HepG2 (cell line): ENCODE measurements at regions of chr1 and their contacts with region 1.

Region 1: GRCh38 chr1:245045087-245045881 is 109.5 kb upstream of the KIF26B start:
- DNase-seq: peak; percentile 98
- ATAC-seq: peak; percentile 98
- H3K4me3 ChIP-seq: peak overlapping the region; percentile 47 to 68 (median 56)
- H3K27ac ChIP-seq: peak overlapping the region; percentile 94
- H3K4me1 ChIP-seq: peaks cover 48% of the 10 kb centered on the region
- H3K27me3 ChIP-seq: no peaks in the 10 kb centered on the region
- CTCF ChIP-seq: 0 out of 2 replicates have a peak, but pooled peaks have one; percentile 7
- EP300 ChIP-seq: no peak; a peak in 1 of 4 replicates
- POLR2A ChIP-seq: peak; percentile 58 to 69
- RAD21 ChIP-seq: 0 out of 2 replicates have a peak, but pooled peaks have one; percentile 20

Region 2: GRCh38 chr1:244599937-244600350 is 445.3 kb before region 1 on chr1:
- CTCF ChIA-PET with region 1: no interaction called
- POLR2A ChIA-PET with region 1: no interaction called
- in situ Hi-C with region 1: loop called (anchors 25 kb)
- intact Hi-C with region 1: loop called (anchors 1 kb)
- DNase-seq: peak; percentile 16
- ATAC-seq: no peak
- H3K4me3 ChIP-seq: no peak overlapping the region
- H3K27ac ChIP-seq: no peak overlapping the region
- H3K4me1 ChIP-seq: no peaks in the 10 kb centered on the region
- H3K27me3 ChIP-seq: 0 out of 5 replicates have a peak, but pooled peaks cover 0 to 10% of the 10 kb centered on the region in 2 experiments
- CTCF ChIP-seq: no peak
- EP300 ChIP-seq: no peak; a peak in 1 of 4 replicates
- POLR2A ChIP-seq: no peak
- RAD21 ChIP-seq: no peak

Region 3: DNA sequence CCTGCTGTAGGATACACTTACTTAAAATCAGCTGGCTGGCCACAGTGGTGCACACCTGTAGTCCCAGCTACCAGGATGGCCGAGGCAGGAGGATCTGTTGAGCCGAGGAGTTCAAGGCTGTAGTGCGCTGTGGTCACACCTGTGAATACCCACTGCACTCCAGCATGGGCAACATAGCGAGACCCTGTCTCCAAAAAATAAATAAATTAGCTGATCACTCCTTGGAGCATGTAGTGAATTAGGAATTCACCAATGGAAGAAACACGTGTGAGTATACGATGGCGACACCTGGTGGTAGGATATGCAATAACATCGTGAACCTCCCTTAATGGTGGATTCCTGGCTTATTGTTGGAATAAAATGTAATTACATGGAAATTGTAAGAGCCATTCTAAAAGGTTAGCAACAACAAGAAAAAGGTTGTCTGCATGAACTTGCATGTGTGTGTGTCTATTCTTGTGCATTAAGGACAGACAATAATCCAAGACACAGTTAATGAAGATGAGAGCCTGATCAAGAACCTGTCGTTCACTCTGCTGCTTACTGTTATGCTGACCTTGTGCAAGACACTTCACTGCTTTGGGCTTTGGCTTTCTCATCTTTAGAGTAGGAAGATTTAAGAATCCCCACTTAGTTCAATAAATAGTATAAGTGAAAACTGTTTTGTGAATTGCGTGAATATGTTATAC is 248.4 kb before region 1 on chr1:
- CTCF ChIA-PET with region 1: interaction called, 13 read pairs
- POLR2A ChIA-PET with region 1: no interaction called
- in situ Hi-C with region 1: no loop called
- intact Hi-C with region 1: loop called (anchors 1 kb)
- DNase-seq: peak; percentile 51
- ATAC-seq: peak; percentile 52
- H3K4me3 ChIP-seq: no peak overlapping the region
- H3K27ac ChIP-seq: no peak overlapping the region
- H3K4me1 ChIP-seq: peaks cover 30% of the 10 kb centered on the region
- H3K27me3 ChIP-seq: no peaks in the 10 kb centered on the region
- CTCF ChIP-seq: peak; percentile 89
- EP300 ChIP-seq: no peak
- POLR2A ChIP-seq: no peak
- RAD21 ChIP-seq: peak; percentile 30

Region 4: DNA sequence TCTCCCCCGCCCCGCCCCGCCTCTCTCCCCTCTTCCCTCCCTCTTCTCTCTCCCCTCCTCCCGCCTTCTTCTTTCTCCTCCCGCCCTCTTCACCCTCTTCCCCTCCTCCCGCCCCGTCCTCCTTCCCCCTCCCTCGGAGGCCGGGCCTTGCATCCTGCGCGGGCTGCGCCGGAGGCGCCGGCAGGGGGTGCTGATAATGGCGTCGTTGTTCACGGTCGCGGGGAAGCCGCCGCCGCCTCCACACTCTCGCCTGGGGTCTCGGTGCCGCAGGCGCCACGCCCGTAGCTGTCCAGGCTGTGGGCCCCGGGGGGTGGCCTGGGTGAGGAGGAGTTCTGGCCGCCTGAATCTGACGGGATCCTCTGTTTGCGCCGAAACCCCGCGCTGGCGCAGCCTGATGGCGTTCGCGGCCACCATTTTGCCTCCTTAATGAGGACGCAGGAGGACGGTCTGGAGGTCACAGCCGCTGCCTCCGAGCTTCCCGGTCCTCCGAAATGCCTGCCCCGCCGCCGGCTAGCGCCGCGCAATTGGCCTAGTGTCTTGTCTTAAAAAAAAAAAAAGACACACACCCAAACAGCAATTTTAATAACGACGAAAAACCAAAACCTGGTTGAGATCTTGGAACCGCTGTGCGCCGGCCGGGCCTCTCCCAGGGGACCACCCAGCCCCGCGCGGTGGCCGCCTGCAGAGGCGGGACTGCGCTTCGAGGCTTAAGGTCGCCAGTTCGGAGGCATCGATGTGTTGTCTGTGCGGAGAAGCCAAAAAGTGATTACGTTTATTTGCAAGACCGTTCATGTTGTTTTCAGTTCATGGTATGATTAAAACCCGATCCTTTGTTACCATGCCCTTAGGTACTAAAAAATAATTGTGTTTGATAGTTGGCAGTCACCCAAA is 74.4 kb before region 1 on chr1:
- CTCF ChIA-PET with region 1: interaction called, 6 read pairs
- POLR2A ChIA-PET with region 1: interaction called, 6 read pairs
- in situ Hi-C with region 1: loop called (anchors 5 kb)
- intact Hi-C with region 1: loop called (anchors 1 kb)
- DNase-seq: peak; percentile 91
- ATAC-seq: peak; percentile 79
- H3K4me3 ChIP-seq: peak overlapping the region; percentile 66 to 80 (median 75)
- H3K27ac ChIP-seq: peak overlapping the region; percentile 98
- H3K4me1 ChIP-seq: peaks cover 25% of the 10 kb centered on the region
- H3K27me3 ChIP-seq: no peaks in the 10 kb centered on the region; a peak in 1 of 5 replicates
- CTCF ChIP-seq: peak; percentile 82
- EP300 ChIP-seq: no peak; a peak in 2 of 4 replicates
- POLR2A ChIP-seq: peak; percentile 68 to 87; a peak in 3 of 4 replicates
- RAD21 ChIP-seq: peak; percentile 73

Region 5: DNA sequence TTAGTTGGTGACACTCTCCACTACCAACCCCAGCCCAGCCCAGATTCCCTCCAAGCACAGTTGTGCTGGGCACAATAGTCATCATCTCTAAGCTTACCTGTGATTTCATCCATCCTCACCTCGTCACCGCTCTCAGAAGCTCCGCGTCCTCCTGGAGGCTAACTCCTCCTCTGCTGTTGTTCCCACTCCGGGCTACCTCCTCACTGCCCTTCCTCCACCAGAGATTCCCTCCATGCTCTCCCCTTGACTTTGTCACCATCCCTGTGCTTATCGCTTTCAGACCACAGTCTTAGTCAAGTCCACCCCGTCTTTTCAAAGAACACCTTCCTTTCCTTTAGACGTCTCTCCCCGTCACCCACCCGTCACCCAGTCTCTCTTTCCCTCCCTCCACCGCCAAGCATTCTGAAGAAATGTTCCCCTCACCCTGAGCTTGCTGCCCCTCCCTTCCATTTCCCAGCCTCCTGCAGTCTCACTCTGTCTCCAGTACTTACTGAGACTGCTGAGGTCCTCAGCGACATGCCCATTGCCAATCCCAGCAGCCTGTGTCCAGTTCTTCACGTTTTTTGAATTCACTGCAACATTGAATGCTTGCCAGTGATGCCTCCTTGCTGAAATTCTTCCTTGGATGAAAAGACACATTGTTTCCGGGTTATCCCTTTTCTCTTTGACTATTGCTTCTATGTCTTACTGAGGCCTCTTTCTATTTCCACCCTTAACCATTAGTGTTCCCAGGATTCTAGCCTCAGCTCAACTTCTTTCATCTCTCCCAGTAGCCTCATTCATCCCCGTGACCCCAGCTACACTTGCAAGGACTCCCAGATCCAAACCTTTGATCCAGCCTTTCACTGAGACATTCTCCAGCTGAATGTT is 62.7 kb after region 1 on chr1:
- CTCF ChIA-PET with region 1: no interaction called
- POLR2A ChIA-PET with region 1: no interaction called
- in situ Hi-C with region 1: no loop called
- intact Hi-C with region 1: loop called (anchors 1 kb)
- DNase-seq: no peak
- ATAC-seq: peak; percentile 41
- H3K4me3 ChIP-seq: peak overlapping the region; percentile 39 to 68 (median 55); a peak in 4 of 6 replicates
- H3K27ac ChIP-seq: peak overlapping the region; percentile 77
- H3K4me1 ChIP-seq: peaks cover 53% of the 10 kb centered on the region
- H3K27me3 ChIP-seq: no peaks in the 10 kb centered on the region
- CTCF ChIP-seq: no peak
- EP300 ChIP-seq: no peak
- POLR2A ChIP-seq: no peak
- RAD21 ChIP-seq: no peak

Region 6: GRCh38 chr1:245129319-245130240 is 84.3 kb after region 1 on chr1:
- CTCF ChIA-PET with region 1: no interaction called
- POLR2A ChIA-PET with region 1: no interaction called
- in situ Hi-C with region 1: no loop called
- intact Hi-C with region 1: no loop called
- DNase-seq: no peak
- ATAC-seq: no peak
- H3K4me3 ChIP-seq: no peak overlapping the region
- H3K27ac ChIP-seq: no peak overlapping the region
- H3K4me1 ChIP-seq: peaks cover 18% of the 10 kb centered on the region
- H3K27me3 ChIP-seq: peaks cover 0 to 16% of the 10 kb centered on the region in 2 experiments; a peak in 4 of 5 replicates
- CTCF ChIP-seq: no peak
- EP300 ChIP-seq: no peak
- POLR2A ChIP-seq: no peak
- RAD21 ChIP-seq: no peak